ENCODE measurements at regions of chr1 and their contacts with region 1.

Region 1: GRCh38 chr1:182143154-182143657 is 81.7 kb upstream of the ZNF648 start:
- DNase-seq: peak; percentile 95
- H3K4me3 ChIP-seq: no peak overlapping the region
- H3K27ac ChIP-seq: peak overlapping the region; percentile 84 to 94 (median 86)
- H3K4me1 ChIP-seq: peaks cover 21 to 32% (median 27%) of the 10 kb centered on the region in 4 donors
- H3K27me3 ChIP-seq: no peaks in the 10 kb centered on the region
- CTCF ChIP-seq: peak; percentile 93 to 98 (median 94)
- EP300 ChIP-seq: no peak
- POLR2A ChIP-seq: no peak

Region 2: GRCh38 chr1:182391362-182392044 is 248.3 kb after region 1 on chr1 and contains the start of gene GLUL:
- in situ Hi-C with region 1: loop called (anchors 5 to 10 kb)
- intact Hi-C with region 1: loop called (anchors 2 kb)
- DNase-seq: peak; percentile 95
- H3K4me3 ChIP-seq: peak within 1 kb of the TSS; percentile 84 to 98 (median 86)
- H3K27ac ChIP-seq: peak within 1 kb of the TSS; percentile 97 to 100 (median 98)
- H3K4me1 ChIP-seq: peaks cover 0 to 39% (median 22%) of the 10 kb centered on the region in 4 donors
- H3K27me3 ChIP-seq: no peaks in the 10 kb centered on the region
- CTCF ChIP-seq: peak in 2 of 5 experiments; percentile 37 to 42
- EP300 ChIP-seq: no peak
- POLR2A ChIP-seq: peak; percentile 99
- total RNA-seq, gene GLUL: 312 to 1,104 (median 985) TPM

Region 3: GRCh38 chr1:182397771-182398393 is 254.7 kb after region 1 on chr1:
- in situ Hi-C with region 1: loop called (anchors 5 to 10 kb)
- intact Hi-C with region 1: loop called (anchors 2 kb)
- DNase-seq: no peak
- H3K4me3 ChIP-seq: no peak overlapping the region
- H3K27ac ChIP-seq: peak overlapping the region in 1 of 4 donors; percentile 7
- H3K4me1 ChIP-seq: peaks cover 4 to 27% (median 10%) of the 10 kb centered on the region in 4 donors
- H3K27me3 ChIP-seq: no peaks in the 10 kb centered on the region
- CTCF ChIP-seq: no peak
- EP300 ChIP-seq: no peak
- POLR2A ChIP-seq: no peak